T-cell (primary cell): ENCODE measurements at regions of chr1 and their contacts with region 1.

Region 1: GRCh38 chr1:66436378-66437145 is 97.4 kb upstream of the SGIP1 start:
- DNase-seq: peak in 28 of 35 experiments; percentile 4 to 57 (median 22)
- ATAC-seq: peak; percentile 73 to 91 (median 86)
- H3K4me3 ChIP-seq: no peak overlapping the region
- H3K4me3 Mint-ChIP-seq: no peak overlapping the region
- H3K27ac ChIP-seq: no peak overlapping the region
- H3K27ac Mint-ChIP-seq: peak overlapping the region; percentile 21 to 59
- H3K4me1 ChIP-seq: peaks cover 2 to 6% of the 10 kb centered on the region in 2 experiments
- H3K4me1 Mint-ChIP-seq: peaks cover 7 to 29% (median 15%) of the 10 kb centered on the region in 3 donors
- H3K27me3 ChIP-seq: no peaks in the 10 kb centered on the region
- H3K27me3 Mint-ChIP-seq: no peaks in the 10 kb centered on the region

Region 2: GRCh38 chr1:65395887-65396612 is 1040.5 kb before region 1 on chr1:
- CTCF ChIA-PET with region 1: interaction called in 1 of 2 experiments, 15 read pairs
- POLR2A ChIA-PET with region 1: no interaction called
- DNase-seq: no peak
- ATAC-seq: no peak
- H3K4me3 ChIP-seq: no peak overlapping the region
- H3K4me3 Mint-ChIP-seq: no peak overlapping the region
- H3K27ac ChIP-seq: no peak overlapping the region
- H3K27ac Mint-ChIP-seq: no peak overlapping the region
- H3K4me1 ChIP-seq: no peaks in the 10 kb centered on the region
- H3K4me1 Mint-ChIP-seq: peaks cover 0 to 19% (median 8%) of the 10 kb centered on the region in 3 donors
- H3K27me3 ChIP-seq: no peaks in the 10 kb centered on the region
- H3K27me3 Mint-ChIP-seq: peaks cover 0 to 3% of the 10 kb centered on the region in 2 donors

Region 3: GRCh38 chr1:66242646-66243547 is 193.7 kb before region 1 on chr1:
- CTCF ChIA-PET with region 1: interaction called, 7 to 320 read pairs
- POLR2A ChIA-PET with region 1: no interaction called
- DNase-seq: peak; percentile 28 to 85 (median 65)
- ATAC-seq: peak; percentile 76 to 90 (median 83)
- H3K4me3 ChIP-seq: no peak overlapping the region
- H3K4me3 Mint-ChIP-seq: no peak overlapping the region
- H3K27ac ChIP-seq: peak overlapping the region; percentile 35
- H3K27ac Mint-ChIP-seq: no peak overlapping the region
- H3K4me1 ChIP-seq: peaks cover 14 to 25% of the 10 kb centered on the region in 2 experiments
- H3K4me1 Mint-ChIP-seq: peaks cover 0 to 27% (median 21%) of the 10 kb centered on the region in 3 donors
- H3K27me3 ChIP-seq: no peaks in the 10 kb centered on the region
- H3K27me3 Mint-ChIP-seq: peaks cover 6 to 7% of the 10 kb centered on the region in 2 donors

Region 4: DNA sequence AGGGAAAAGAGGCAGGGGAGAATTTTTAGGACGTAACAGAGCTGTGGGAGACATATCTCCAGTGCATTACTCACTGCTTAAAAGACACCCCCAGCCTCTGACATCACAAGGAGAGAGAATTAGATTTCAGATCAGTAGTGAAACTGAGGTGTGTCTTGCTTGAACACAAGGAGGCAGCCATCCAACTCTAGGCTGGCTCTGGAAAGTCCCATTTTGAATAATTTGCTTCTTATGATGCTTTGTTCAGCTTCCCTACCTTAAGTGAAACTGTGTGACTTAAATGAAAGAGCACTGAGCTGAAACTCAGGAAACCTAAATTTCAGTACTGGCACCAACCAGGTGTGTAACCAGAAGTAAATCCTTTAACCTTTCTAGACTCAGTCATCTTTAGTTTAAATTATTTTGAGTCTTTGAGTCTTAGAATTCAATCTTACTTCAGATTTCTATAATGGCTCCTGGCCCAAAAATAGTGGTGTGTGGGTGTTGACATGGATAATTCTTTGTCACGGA is 154.2 kb before region 1 on chr1:
- CTCF ChIA-PET with region 1: interaction called in 1 of 2 experiments, 15 read pairs
- POLR2A ChIA-PET with region 1: no interaction called
- DNase-seq: peak in 34 of 35 experiments; percentile 25 to 87 (median 58)
- ATAC-seq: peak; percentile 77 to 96 (median 84)
- H3K4me3 ChIP-seq: no peak overlapping the region
- H3K4me3 Mint-ChIP-seq: peak overlapping the region in 1 of 3 donors; percentile 23
- H3K27ac ChIP-seq: peak overlapping the region; percentile 61
- H3K27ac Mint-ChIP-seq: peak overlapping the region; percentile 84 to 87
- H3K4me1 ChIP-seq: peaks cover 27 to 52% of the 10 kb centered on the region in 2 experiments
- H3K4me1 Mint-ChIP-seq: peaks cover 87 to 94% (median 88%) of the 10 kb centered on the region in 3 donors
- H3K27me3 ChIP-seq: no peaks in the 10 kb centered on the region
- H3K27me3 Mint-ChIP-seq: no peaks in the 10 kb centered on the region

Region 5: DNA sequence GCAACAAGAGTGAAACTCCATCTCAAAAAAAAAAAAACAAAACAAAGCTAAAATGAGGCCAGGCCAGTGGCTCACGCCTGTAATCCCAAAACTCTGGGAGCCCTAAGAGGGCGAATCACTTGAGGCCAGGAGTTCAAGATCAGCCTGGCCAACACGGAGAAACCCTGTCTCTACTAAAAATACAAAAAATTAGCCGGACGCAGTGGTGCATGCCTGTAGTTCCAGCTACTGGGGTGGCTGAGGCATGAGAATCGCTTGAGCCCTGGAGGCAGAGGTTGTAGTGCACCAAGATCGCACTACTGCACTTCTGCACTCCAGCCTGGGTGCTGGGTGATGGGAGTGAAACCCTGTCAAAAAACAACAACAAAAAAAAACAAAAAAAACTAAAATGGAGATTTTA is 93.9 kb before region 1 on chr1:
- CTCF ChIA-PET with region 1: interaction called, 3 to 13 read pairs
- POLR2A ChIA-PET with region 1: no interaction called
- DNase-seq: no peak
- ATAC-seq: peak in 1 of 4 experiments; percentile 33
- H3K4me3 ChIP-seq: no peak overlapping the region
- H3K4me3 Mint-ChIP-seq: peak overlapping the region; percentile 29 to 65 (median 48)
- H3K27ac ChIP-seq: no peak overlapping the region
- H3K27ac Mint-ChIP-seq: peak overlapping the region; percentile 85 to 89
- H3K4me1 ChIP-seq: peaks cover 31 to 66% of the 10 kb centered on the region in 2 experiments
- H3K4me1 Mint-ChIP-seq: peaks cover 80 to 89% (median 83%) of the 10 kb centered on the region in 3 donors
- H3K27me3 ChIP-seq: no peaks in the 10 kb centered on the region
- H3K27me3 Mint-ChIP-seq: no peaks in the 10 kb centered on the region

Region 6: GRCh38 chr1:66383168-66383567 is 53.4 kb before region 1 on chr1:
- CTCF ChIA-PET with region 1: no interaction called
- POLR2A ChIA-PET with region 1: interaction called in 1 of 2 experiments, 12 read pairs
- DNase-seq: no peak
- ATAC-seq: no peak
- H3K4me3 ChIP-seq: no peak overlapping the region
- H3K4me3 Mint-ChIP-seq: no peak overlapping the region
- H3K27ac ChIP-seq: no peak overlapping the region
- H3K27ac Mint-ChIP-seq: no peak overlapping the region
- H3K4me1 ChIP-seq: peaks cover 4% of the 10 kb centered on the region in 2 experiments
- H3K4me1 Mint-ChIP-seq: peaks cover 14 to 34% (median 20%) of the 10 kb centered on the region in 3 donors
- H3K27me3 ChIP-seq: no peaks in the 10 kb centered on the region
- H3K27me3 Mint-ChIP-seq: no peaks in the 10 kb centered on the region

Region 7: GRCh38 chr1:66395202-66396061 is 41.1 kb before region 1 on chr1:
- CTCF ChIA-PET with region 1: no interaction called
- POLR2A ChIA-PET with region 1: no interaction called
- DNase-seq: no peak
- ATAC-seq: no peak
- H3K4me3 ChIP-seq: no peak overlapping the region
- H3K4me3 Mint-ChIP-seq: no peak overlapping the region
- H3K27ac ChIP-seq: no peak overlapping the region
- H3K27ac Mint-ChIP-seq: no peak overlapping the region
- H3K4me1 ChIP-seq: no peaks in the 10 kb centered on the region
- H3K4me1 Mint-ChIP-seq: peaks cover 5 to 16% (median 8%) of the 10 kb centered on the region in 3 donors
- H3K27me3 ChIP-seq: no peaks in the 10 kb centered on the region
- H3K27me3 Mint-ChIP-seq: no peaks in the 10 kb centered on the region